PC-9 (cell line): ENCODE measurements at regions of chr11 and their contacts with region 1.

Region 1: GRCh38 chr11:57885298-57886050 is 123.9 kb downstream of the CTNND1 start:
- DNase-seq: no peak
- H3K4me3 ChIP-seq: no peak overlapping the region
- H3K27ac ChIP-seq: no peak overlapping the region
- H3K4me1 ChIP-seq: no peaks in the 10 kb centered on the region
- H3K27me3 ChIP-seq: 0 out of 2 replicates have a peak, but pooled peaks cover 2% of the 10 kb centered on the region
- CTCF ChIP-seq: no peak

Region 2: DNA sequence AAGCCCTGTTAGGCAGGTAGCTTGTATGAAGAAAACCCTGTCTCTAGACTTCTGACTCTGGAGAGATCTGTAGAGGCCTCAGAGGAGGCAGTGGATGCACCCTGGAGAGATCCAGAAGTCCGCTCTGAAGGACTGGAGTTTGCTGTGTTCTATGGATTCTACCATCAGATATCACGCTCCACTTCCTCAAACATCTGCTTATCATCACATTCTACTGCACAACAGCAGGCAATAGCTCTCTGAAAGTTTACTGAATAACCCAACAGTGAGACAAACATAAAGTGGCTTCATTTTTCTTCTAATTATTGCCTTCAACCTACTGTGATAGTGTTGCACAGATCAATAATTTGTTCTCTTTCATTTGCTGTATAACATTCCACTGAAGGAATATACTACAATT is 79.2 kb after region 1 on chr11:
- CTCF ChIA-PET with region 1: no interaction called
- POLR2A ChIA-PET with region 1: interaction called, 35 read pairs
- intact Hi-C with region 1: no loop called
- DNase-seq: no peak
- H3K4me3 ChIP-seq: no peak overlapping the region
- H3K27ac ChIP-seq: no peak overlapping the region
- H3K4me1 ChIP-seq: no peaks in the 10 kb centered on the region
- H3K27me3 ChIP-seq: peaks cover 15% of the 10 kb centered on the region; the same call in 1 of the 2 replicates
- CTCF ChIP-seq: no peak